Dendritic cell treated with granulocyte-macrophage colony-stimulating factor and Interleukin-4, amounts not matched to agents 40 ng/mL and 50 ng/mL, for 4 days (primary cell): ENCODE measurements at regions of chr21 and their contacts with region 1.

Region 1: DNA sequence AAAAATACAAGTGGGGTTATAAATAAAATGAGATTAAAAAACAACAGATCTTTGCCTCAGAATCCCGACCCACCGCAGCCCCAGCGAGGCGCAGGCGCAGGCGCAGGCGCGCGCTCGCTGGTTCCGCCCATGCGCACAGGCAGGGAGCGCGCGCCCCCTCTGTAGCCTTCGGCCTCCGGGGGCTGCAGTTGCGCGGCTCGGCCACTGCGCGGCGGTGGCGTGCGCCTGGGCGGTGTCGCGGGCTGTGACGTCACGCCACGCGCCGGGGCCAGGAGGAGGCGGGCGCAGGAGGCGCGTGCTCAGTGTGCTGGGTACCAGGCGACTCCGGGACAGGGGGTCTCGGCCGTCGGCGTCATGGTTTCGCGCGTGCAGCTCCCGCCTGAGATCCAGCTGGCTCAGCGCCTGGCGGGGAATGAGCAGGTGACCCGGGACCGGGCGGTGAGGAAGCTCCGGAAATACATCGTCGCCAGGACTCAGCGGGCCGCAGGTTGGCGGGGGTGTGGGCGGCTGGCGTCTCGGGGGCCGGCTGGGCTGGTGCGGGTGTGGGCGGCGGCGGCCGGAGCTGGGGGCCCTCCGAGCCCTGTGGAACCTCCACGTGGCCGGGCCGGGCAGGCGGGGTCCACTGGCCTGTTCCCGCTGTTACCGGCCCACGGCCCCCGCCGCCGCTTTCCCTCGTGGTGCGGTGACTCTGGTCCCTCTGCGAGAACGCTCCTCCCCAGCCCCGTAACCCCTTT is at the start of gene RRP1:
- H3K4me3 Mint-ChIP-seq: peak within 1 kb of the TSS; percentile 96
- H3K27ac Mint-ChIP-seq: peak within 1 kb of the TSS; percentile 96
- H3K4me1 Mint-ChIP-seq: peaks cover 39% of the 10 kb centered on the region
- H3K27me3 Mint-ChIP-seq: peaks cover 5% of the 10 kb centered on the region

Region 2: DNA sequence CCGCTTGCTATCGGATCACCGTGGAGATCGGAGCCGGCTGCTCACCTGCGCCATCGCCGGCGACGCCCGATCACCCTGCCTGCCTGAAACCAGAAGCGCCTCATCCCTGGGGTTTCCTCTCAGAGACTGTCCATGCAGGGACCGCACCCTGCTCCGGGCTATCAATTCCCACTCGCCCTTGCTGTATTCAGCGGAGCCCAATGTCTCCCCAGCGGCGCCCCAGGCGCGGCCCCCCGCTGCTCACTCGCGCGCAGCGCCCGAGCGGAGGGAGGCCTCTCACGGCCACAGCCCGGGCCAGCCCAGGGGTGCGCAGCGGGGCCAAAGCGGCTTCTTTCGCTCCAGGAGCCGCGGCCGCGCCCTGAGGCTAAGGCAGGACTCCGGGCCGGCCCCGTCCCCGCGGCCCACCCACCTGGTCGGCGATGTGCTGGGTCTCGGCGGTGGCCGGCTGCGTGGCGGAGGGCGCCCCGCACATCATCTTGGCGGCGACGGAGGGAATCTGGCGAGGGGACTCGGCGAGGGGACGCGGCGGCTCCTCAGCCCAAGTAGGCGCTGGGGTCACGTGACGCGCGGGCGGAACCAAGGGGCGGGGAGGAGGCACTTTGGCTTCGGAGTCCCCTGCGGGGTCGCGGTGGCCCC is 13.5 kb before region 1 on chr21 and contains the start of gene CSTB:
- intact Hi-C with region 1: loop called (anchors 1 kb)
- H3K4me3 Mint-ChIP-seq: peak within 1 kb of the TSS; percentile 99
- H3K27ac Mint-ChIP-seq: peak within 1 kb of the TSS; percentile 98
- H3K4me1 Mint-ChIP-seq: peaks cover 70% of the 10 kb centered on the region
- H3K27me3 Mint-ChIP-seq: no peaks in the 10 kb centered on the region